ENCODE measurements at regions of chr1 and their contacts with region 1.

Region 1: GRCh38 chr1:20100632-20101355 is 18.5 kb downstream of the PLA2G2D start:
- DNase-seq: peak; percentile 74
- ATAC-seq: peak; percentile 94
- H3K4me3 ChIP-seq: no peak overlapping the region
- H3K4me3 Mint-ChIP-seq: no peak overlapping the region
- H3K27ac ChIP-seq: no peak overlapping the region
- H3K27ac Mint-ChIP-seq: no peak overlapping the region
- H3K4me1 ChIP-seq: peaks cover 5 to 8% of the 10 kb centered on the region in 2 donors
- H3K4me1 Mint-ChIP-seq: peaks cover 3% of the 10 kb centered on the region
- H3K27me3 ChIP-seq: no peaks in the 10 kb centered on the region
- H3K27me3 Mint-ChIP-seq: peaks cover 3% of the 10 kb centered on the region
- CTCF ChIP-seq: peak; percentile 80

Region 2: DNA sequence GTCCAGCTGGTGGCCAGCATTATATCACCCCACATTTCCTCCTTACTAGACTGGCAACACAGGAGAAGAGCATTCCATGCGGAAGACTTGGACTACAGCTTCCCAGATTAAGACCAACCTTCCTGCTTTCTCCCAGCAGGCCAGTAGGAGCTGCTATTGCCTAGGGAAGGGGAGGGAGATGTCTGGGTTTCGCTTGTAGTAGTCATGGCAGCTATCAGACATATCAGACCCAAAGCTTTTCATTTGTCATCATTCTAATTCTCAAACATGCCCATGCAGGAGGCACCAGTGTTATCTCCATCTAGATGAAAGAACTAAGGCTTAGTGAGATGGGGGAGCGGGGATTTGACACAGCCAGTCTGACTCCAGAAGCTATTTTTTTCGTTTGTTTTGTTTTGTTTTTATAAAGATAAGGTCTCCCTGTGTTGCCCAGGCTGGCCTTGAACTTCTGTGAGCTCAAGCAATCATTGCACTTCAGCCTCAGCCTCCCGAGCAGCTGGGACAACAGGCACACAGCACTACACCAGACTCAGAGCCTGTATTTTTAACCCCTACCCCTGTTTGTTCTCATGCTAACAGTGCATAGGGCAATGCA is 125.9 kb before region 1 on chr1:
- CTCF ChIA-PET with region 1: interaction called, 10 read pairs
- POLR2A ChIA-PET with region 1: no interaction called
- intact Hi-C with region 1: no loop called
- DNase-seq: peak; percentile 59
- ATAC-seq: peak; percentile 39
- H3K4me3 ChIP-seq: no peak overlapping the region
- H3K4me3 Mint-ChIP-seq: no peak overlapping the region
- H3K27ac ChIP-seq: no peak overlapping the region
- H3K27ac Mint-ChIP-seq: no peak overlapping the region
- H3K4me1 ChIP-seq: no peaks in the 10 kb centered on the region
- H3K4me1 Mint-ChIP-seq: peaks cover 2% of the 10 kb centered on the region
- H3K27me3 ChIP-seq: peaks cover 0 to 2% (median 0%) of the 10 kb centered on the region in 4 experiments
- H3K27me3 Mint-ChIP-seq: peaks cover 26% of the 10 kb centered on the region
- CTCF ChIP-seq: peak; percentile 48

Region 3: DNA sequence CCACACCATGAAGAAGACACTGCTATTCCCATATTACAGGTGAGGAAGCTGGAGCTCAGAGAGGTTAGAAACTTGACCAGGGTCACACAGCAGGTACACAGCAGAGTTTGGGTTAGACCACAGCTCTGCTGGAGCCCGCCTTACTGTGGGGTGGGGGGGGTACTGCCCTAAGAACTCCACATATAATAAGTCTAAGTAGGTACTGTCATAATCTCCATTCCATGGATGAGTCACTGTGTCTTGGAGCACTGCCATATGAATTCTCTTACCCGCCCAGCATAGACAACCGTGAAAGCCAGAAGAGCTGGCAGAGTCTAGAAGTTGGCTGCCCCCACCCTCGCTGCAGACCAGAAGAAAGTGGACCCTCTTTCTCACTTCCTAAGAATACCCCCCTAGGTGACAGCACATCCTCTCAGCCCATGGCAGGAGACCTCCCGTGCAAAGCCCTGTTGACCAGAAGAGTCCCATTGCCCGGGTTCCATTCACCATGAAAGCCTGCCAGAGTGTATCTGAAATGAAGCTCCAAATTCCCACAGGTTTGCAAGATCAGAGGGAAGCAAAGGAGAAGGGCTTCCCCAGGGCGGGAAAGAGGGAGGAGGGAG is 23.8 kb after region 1 on chr1:
- CTCF ChIA-PET with region 1: interaction called, 4 read pairs
- POLR2A ChIA-PET with region 1: interaction called, 4 read pairs
- intact Hi-C with region 1: loop called (anchors 1 kb)
- DNase-seq: no peak
- ATAC-seq: no peak
- H3K4me3 ChIP-seq: no peak overlapping the region
- H3K4me3 Mint-ChIP-seq: no peak overlapping the region
- H3K27ac ChIP-seq: no peak overlapping the region
- H3K27ac Mint-ChIP-seq: no peak overlapping the region
- H3K4me1 ChIP-seq: peaks cover 33 to 48% of the 10 kb centered on the region in 2 donors
- H3K4me1 Mint-ChIP-seq: peaks cover 59% of the 10 kb centered on the region
- H3K27me3 ChIP-seq: no peaks in the 10 kb centered on the region
- H3K27me3 Mint-ChIP-seq: no peaks in the 10 kb centered on the region
- CTCF ChIP-seq: no peak

Measured in B cell (primary cell).